Activated CD4-positive, alpha-beta T cell treated with anti-CD3 and anti-CD28 coated beads for 36 hours (primary cell): ENCODE measurements at regions of chr14 and their contacts with region 1.

Region 1: GRCh38 chr14:71555654-71556559 is 376.3 kb upstream of the RGS6 start:
- DNase-seq: peak; percentile 81
- ATAC-seq: peak; percentile 86
- H3K4me3 Mint-ChIP-seq: peak overlapping the region; percentile 50
- H3K27ac Mint-ChIP-seq: peak overlapping the region; percentile 98
- H3K4me1 Mint-ChIP-seq: peaks cover 76% of the 10 kb centered on the region
- H3K27me3 Mint-ChIP-seq: no peaks in the 10 kb centered on the region

Region 2: DNA sequence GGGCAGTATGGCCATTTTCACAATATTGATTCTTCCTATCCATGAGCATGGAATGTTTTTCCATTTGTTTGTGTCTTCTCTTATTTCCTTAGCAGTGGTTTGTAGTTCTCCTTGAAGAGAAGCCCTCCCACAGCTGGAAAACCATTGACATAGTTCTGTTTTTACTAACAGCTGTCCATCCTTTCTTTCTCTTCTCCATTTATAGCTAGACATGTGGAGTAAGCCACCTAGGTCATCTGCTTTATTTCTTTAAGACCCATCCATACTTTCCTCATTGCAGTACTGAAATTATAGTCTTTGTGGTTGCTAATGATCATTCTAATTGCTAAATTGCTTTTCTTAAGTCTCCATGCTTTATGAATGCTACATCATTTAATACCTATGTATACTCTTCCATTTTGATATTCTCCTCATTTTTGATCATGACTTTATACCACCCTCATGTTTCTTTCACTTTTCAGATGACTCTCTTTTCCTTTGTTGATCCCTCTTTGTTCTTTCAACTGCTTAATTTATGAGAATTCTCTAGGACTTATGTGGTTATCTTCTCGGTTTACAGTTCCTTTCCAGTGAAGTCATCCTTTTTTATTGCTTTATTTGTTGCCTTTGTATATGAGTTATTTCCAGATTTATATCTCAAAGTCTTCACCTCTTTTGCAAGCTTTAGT is 534.4 kb before region 1 on chr14:
- CTCF ChIA-PET with region 1: no interaction called
- POLR2A ChIA-PET with region 1: no interaction called
- intact Hi-C with region 1: loop called in 1 of 2 experiments (anchors 1 kb)
- DNase-seq: no peak
- ATAC-seq: peak; percentile 86
- H3K4me3 Mint-ChIP-seq: peak overlapping the region; percentile 4
- H3K27ac Mint-ChIP-seq: peak overlapping the region; percentile 68
- H3K4me1 Mint-ChIP-seq: peaks cover 33% of the 10 kb centered on the region
- H3K27me3 Mint-ChIP-seq: no peaks in the 10 kb centered on the region

Region 3: DNA sequence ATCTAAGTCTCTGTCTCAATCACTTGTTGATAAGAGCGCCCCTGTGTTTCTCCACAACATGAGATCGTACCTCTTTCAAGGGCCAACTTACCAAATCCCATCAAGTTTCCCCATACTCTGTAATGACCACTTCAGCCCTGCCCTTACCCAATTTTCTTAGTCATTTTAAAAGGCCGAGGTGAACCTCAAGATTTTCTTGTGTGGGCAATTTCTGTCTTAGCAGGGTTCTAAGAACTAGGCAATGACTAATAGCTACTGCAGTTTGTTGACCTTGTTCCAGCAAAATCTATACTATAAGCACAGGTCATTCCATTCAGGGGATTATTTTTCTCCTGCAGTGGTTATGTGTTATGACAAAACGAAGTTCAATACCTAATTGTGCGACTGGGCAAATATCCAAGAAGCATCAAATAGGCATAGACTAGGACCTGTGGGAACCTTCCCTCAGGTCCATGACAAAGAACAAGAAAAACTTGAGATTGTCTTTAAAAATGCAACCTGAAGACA is 288.8 kb before region 1 on chr14:
- CTCF ChIA-PET with region 1: no interaction called
- POLR2A ChIA-PET with region 1: no interaction called
- intact Hi-C with region 1: loop called in 1 of 2 experiments (anchors 1 kb)
- DNase-seq: peak; percentile 26
- ATAC-seq: peak; percentile 88
- H3K4me3 Mint-ChIP-seq: no peak overlapping the region
- H3K27ac Mint-ChIP-seq: no peak overlapping the region
- H3K4me1 Mint-ChIP-seq: peaks cover 19% of the 10 kb centered on the region
- H3K27me3 Mint-ChIP-seq: no peaks in the 10 kb centered on the region

Region 4: DNA sequence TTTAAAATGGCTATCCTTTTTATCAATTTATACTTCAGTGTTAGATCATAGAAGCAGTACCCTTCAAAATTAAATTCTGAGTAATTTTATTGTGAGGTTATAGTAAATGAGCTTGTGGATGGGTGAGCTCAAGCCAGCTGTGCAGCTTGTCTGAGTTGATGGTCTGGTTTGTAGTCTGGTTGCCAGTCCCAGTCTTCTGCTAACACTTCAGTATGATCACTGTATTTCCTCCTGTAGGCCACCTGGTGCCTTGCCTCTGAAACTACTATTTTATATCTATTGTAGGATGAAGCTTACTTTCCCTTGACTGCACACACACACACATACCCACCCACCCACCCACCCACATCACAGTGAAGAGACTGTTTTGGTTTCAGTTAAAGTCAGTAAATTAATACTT is 152.3 kb before region 1 on chr14:
- CTCF ChIA-PET with region 1: interaction called, 6 read pairs
- POLR2A ChIA-PET with region 1: interaction called, 3 read pairs
- intact Hi-C with region 1: loop called (anchors 1 to 5 kb)
- DNase-seq: peak; percentile 43
- ATAC-seq: peak; percentile 78
- H3K4me3 Mint-ChIP-seq: no peak overlapping the region
- H3K27ac Mint-ChIP-seq: no peak overlapping the region
- H3K4me1 Mint-ChIP-seq: peaks cover 34% of the 10 kb centered on the region
- H3K27me3 Mint-ChIP-seq: no peaks in the 10 kb centered on the region

Region 5: GRCh38 chr14:71497645-71498086 is 58.2 kb before region 1 on chr14:
- CTCF ChIA-PET with region 1: interaction called, 3 read pairs
- POLR2A ChIA-PET with region 1: interaction called, 3 read pairs
- intact Hi-C with region 1: loop called (anchors 1 to 2 kb)
- DNase-seq: peak; percentile 11
- ATAC-seq: peak; percentile 93
- H3K4me3 Mint-ChIP-seq: no peak overlapping the region
- H3K27ac Mint-ChIP-seq: no peak overlapping the region
- H3K4me1 Mint-ChIP-seq: peaks cover 16% of the 10 kb centered on the region
- H3K27me3 Mint-ChIP-seq: no peaks in the 10 kb centered on the region

Region 6: GRCh38 chr14:71753126-71753830 is 197.4 kb after region 1 on chr14:
- CTCF ChIA-PET with region 1: interaction called, 3 read pairs
- POLR2A ChIA-PET with region 1: no interaction called
- intact Hi-C with region 1: loop called in 1 of 2 experiments (anchors 1 kb)
- DNase-seq: peak; percentile 84
- ATAC-seq: peak; percentile 51
- H3K4me3 Mint-ChIP-seq: no peak overlapping the region
- H3K27ac Mint-ChIP-seq: no peak overlapping the region
- H3K4me1 Mint-ChIP-seq: peaks cover 3% of the 10 kb centered on the region
- H3K27me3 Mint-ChIP-seq: no peaks in the 10 kb centered on the region